Breast epithelium (tissue), 4 donors: ENCODE measurements at regions of chr2 and their contacts with region 1.

Region 1: GRCh38 chr2:9347411-9347881 is 75.9 kb downstream of the ITGB1BP1 start:
- DNase-seq: peak in 1 of 2 donors; percentile 30
- H3K4me3 ChIP-seq: peak overlapping the region in 1 of 3 donors; percentile 6
- H3K27ac ChIP-seq: peak overlapping the region; percentile 26 to 77
- H3K4me1 ChIP-seq: no peaks in the 10 kb centered on the region
- H3K27me3 ChIP-seq: no peaks in the 10 kb centered on the region
- CTCF ChIP-seq: no peak
- POLR2A ChIP-seq: no peak

Region 2: GRCh38 chr2:9142551-9143263 is 204.7 kb before region 1 on chr2:
- intact Hi-C with region 1: loop called (anchors 10 kb)
- DNase-seq: peak; percentile 63 to 80
- H3K4me3 ChIP-seq: peak overlapping the region in 2 of 3 donors; percentile 12 to 56
- H3K27ac ChIP-seq: peak overlapping the region in 1 of 2 donors; percentile 17
- H3K4me1 ChIP-seq: peaks cover 4% of the 10 kb centered on the region in 2 donors
- H3K27me3 ChIP-seq: no peaks in the 10 kb centered on the region
- CTCF ChIP-seq: peak; percentile 97 to 98 (median 97)
- POLR2A ChIP-seq: no peak